Activated CD8-positive, alpha-beta T cell treated with anti-CD3 and anti-CD28 coated beads, Interleukin-2, amount 10 ng/mL, durations not matched to agents 7 days and 5 days (primary cell): ENCODE measurements at regions of chr6 and their contacts with region 1.

Region 1: DNA sequence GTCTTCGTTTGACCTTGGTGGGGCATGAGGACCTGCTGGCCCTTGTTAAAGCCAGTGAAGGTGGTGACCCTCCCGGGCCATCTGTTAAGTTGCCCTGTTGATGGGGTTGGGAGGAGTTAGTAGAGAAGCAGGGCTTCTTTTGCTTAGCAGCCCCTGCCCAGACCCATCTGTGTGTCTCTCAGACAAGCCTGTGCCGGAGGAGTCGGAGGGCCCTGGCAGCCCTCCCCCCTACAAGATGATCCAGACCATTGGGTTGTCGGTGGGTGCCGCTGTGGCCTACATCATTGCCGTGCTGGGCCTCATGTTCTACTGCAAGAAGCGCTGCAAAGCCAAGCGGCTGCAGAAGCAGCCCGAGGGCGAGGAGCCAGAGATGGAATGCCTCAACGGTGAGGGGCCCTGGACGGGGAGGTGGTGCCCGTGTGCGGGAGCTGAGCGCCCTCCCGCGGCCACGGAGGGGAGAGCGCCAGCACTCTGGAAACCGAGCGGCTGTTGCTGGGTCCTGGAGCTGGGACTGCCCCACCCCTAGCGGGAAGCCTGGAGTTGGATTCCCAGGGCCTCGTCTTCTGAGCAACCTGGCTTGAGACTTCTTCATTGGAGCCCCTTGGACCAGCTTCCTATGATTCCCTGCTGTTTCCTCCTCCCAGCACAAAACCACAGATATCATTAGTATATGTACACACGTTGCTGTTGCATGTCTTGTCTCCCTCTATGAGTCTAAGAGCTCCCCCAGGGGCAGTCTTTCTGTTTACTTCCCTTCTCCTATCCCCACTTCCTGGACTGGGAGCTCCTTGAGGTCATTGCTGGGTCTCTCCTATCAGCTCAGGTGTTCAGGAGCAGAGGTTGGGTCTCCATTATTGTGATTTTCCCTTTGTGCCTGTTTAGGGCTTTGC is 27.6 kb upstream of the SRF start:
- DNase-seq: peak; percentile 85
- ATAC-seq: peak; percentile 95
- H3K4me3 Mint-ChIP-seq: peak overlapping the region; percentile 42
- H3K27ac Mint-ChIP-seq: peak overlapping the region; percentile 87
- H3K4me1 Mint-ChIP-seq: peaks cover 31% of the 10 kb centered on the region
- H3K27me3 Mint-ChIP-seq: no peaks in the 10 kb centered on the region

Region 2: GRCh38 chr6:42901536-42901957 is 241.9 kb before region 1 on chr6:
- CTCF ChIA-PET with region 1: interaction called, 48 read pairs
- POLR2A ChIA-PET with region 1: interaction called, 3 read pairs
- DNase-seq: peak; percentile 84
- ATAC-seq: peak; percentile 98
- H3K4me3 Mint-ChIP-seq: no peak overlapping the region
- H3K27ac Mint-ChIP-seq: peak overlapping the region; percentile 7
- H3K4me1 Mint-ChIP-seq: peaks cover 17% of the 10 kb centered on the region
- H3K27me3 Mint-ChIP-seq: no peaks in the 10 kb centered on the region

Region 3: GRCh38 chr6:42963855-42964605 is 179.4 kb before region 1 on chr6:
- CTCF ChIA-PET with region 1: interaction called, 12 read pairs
- POLR2A ChIA-PET with region 1: no interaction called
- DNase-seq: peak; percentile 67
- ATAC-seq: peak; percentile 56
- H3K4me3 Mint-ChIP-seq: no peak overlapping the region
- H3K27ac Mint-ChIP-seq: no peak overlapping the region
- H3K4me1 Mint-ChIP-seq: peaks cover 15% of the 10 kb centered on the region
- H3K27me3 Mint-ChIP-seq: peaks cover 4% of the 10 kb centered on the region

Region 4: DNA sequence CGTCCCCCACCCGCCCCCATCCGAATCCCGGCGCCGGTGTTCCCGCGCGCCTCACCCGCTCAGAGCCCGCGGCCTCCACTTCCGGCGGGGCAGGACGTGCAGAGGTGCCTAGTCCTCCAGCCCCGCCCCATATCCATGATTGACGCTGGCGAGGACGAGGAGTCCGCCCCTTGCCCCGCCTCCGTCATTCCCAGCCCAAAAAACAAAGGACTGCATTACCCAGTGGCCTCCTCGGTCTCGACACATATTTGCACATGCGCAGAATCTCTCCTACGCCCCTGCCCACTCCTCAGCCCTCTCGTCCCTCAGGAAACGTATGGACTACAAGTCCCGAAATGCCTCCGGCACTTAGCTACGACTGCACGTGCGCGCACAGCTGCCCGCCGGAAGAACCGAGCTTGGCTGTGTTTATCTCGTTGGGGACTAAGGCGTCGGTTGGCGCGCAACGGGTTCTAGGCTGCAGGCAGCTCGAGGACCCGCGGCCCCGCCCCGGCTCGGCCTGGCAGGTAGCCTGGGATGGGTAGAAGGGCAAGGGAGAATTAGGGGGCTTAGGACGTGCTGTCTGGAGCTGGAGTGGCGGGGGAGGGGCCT is 129.5 kb before region 1 on chr6 and contains the starts of genes KLHDC3 and MEA1:
- CTCF ChIA-PET with region 1: interaction called, 61 read pairs
- POLR2A ChIA-PET with region 1: interaction called, 3 read pairs
- DNase-seq: peak; percentile 100
- ATAC-seq: peak; percentile 95
- H3K4me3 Mint-ChIP-seq: peak within 1 kb of the TSS; percentile 97
- H3K27ac Mint-ChIP-seq: peak within 1 kb of the TSS; percentile 90
- H3K4me1 Mint-ChIP-seq: peaks cover 43% of the 10 kb centered on the region
- H3K27me3 Mint-ChIP-seq: no peaks in the 10 kb centered on the region
- total RNA-seq, gene KLHDC3: 75.4 to 76.0 TPM
- total RNA-seq, gene MEA1: 77.1 to 84.1 TPM

Region 5: DNA sequence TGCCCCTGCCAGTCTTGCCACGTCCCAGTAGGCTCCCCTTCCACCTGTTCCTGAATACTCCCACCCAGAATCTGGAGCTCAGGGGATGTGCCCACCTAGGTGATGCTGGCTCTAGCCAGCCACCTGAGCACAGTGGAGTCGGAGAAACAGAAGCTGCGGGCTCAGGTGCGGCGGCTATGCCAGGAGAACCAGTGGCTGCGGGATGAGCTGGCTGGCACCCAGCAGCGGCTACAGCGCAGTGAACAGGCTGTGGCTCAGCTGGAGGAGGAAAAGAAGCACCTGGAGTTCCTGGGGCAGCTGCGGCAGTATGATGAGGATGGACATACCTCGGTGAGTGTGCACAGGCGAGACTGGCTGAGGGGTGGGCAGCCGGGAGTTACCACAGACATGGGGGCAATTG is 80.7 kb before region 1 on chr6:
- CTCF ChIA-PET with region 1: interaction called, 13 read pairs
- POLR2A ChIA-PET with region 1: interaction called, 5 read pairs
- DNase-seq: no peak
- ATAC-seq: no peak
- H3K4me3 Mint-ChIP-seq: no peak overlapping the region
- H3K27ac Mint-ChIP-seq: no peak overlapping the region
- H3K4me1 Mint-ChIP-seq: peaks cover 20% of the 10 kb centered on the region
- H3K27me3 Mint-ChIP-seq: no peaks in the 10 kb centered on the region

Region 6: GRCh38 chr6:43075670-43076463 is 67.6 kb before region 1 on chr6 and contains the start of gene PTK7:
- CTCF ChIA-PET with region 1: interaction called, 25 read pairs
- POLR2A ChIA-PET with region 1: no interaction called
- DNase-seq: no peak
- ATAC-seq: peak; percentile 62
- H3K4me3 Mint-ChIP-seq: peak within 1 kb of the TSS; percentile 40
- H3K27ac Mint-ChIP-seq: no peak within 1 kb of the TSS
- H3K4me1 Mint-ChIP-seq: peaks cover 7% of the 10 kb centered on the region
- H3K27me3 Mint-ChIP-seq: peaks cover 26% of the 10 kb centered on the region
- total RNA-seq, gene PTK7: 1.2 to 1.8 TPM

Region 7: DNA sequence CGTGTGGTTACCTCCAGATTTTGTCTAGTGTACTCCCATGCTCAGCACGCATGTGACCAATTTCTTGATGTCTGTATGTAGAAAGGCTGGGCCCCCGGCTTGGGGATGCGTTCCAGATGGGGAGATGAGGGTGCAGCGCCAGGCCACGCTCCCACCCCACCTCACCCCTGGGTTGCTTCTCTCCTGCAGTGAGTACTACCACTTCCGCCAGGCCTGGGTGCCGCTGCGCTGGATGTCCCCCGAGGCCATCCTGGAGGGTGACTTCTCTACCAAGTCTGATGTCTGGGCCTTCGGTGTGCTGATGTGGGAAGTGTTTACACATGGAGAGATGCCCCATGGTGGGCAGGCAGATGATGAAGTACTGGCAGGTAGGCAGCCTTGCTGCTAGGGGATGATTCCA is 16.1 kb after region 1 on chr6:
- CTCF ChIA-PET with region 1: interaction called, 12 read pairs
- POLR2A ChIA-PET with region 1: interaction called, 3 read pairs
- DNase-seq: no peak
- ATAC-seq: no peak
- H3K4me3 Mint-ChIP-seq: no peak overlapping the region
- H3K27ac Mint-ChIP-seq: no peak overlapping the region
- H3K4me1 Mint-ChIP-seq: no peaks in the 10 kb centered on the region
- H3K27me3 Mint-ChIP-seq: peaks cover 2% of the 10 kb centered on the region